WTC11 (cell line): ENCODE measurements at regions of chr17 and their contacts with region 1.

Region 1: DNA sequence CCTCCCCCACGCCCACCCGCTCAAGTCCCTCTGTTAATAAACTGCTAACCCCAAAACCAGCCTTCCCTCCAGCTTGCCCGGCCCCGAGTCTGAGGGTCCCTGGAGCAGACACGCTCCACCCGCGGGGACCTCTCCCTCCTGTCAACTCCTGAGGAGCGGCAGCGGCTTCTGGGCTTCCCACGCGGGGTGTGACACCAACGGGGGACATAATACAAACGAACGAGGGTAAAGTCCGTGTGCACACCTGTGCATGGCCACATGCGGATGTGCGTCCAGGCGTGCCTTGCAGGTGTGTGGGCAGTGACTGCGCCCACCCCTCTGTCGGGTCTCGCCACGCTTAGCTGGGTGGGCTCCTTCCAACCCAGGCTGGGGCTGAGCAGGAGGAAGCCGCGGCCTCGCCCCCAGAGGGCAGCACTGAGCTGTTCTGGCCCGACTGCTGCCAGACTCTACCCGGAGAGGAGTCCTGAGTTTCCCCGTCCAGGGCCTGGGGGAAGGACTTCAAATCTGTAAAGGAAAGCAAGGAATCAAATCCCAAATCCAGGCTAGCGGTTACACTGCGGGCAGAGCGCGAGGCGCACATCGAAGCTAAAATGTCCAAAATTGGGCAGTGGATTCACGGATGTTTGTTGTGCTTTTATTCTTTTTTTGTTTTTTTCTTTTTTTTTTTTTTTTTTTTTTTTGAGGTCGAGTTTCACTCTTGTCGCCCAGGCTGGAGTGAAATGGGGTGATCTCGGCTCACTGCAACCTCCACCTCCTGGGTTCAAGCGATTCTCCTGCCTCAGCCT is 24.2 kb upstream of the KRT17 start:
- DNase-seq: peak; percentile 94
- ATAC-seq: peak; percentile 81
- H3K4me3 Mint-ChIP-seq: peak overlapping the region; percentile 71
- H3K27ac Mint-ChIP-seq: no peak overlapping the region
- H3K4me1 Mint-ChIP-seq: peaks cover 2% of the 10 kb centered on the region
- H3K27me3 Mint-ChIP-seq: no peaks in the 10 kb centered on the region
- CTCF ChIP-seq: peak; percentile 90

Region 2: DNA sequence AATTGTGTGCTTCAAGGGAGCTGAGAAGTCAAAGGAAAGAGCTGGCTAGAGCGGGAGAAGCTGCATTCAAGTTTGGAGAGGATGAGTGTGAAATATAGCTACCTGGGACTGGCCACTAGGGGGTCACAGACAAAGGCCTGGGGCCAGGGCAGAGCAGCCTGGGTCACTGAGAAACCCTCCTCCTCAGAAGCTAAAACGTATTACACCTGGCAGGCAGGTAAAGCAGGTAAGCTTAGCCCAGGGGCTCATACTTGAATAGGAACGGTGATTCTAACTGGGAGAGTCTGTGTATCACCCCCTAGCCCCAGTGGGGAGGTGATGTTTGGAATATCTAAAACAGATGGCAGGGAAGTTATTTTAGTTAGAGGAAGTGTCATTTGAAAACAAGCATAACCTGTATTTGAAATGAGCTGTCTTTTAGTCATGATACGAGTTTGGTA is 231.0 kb before region 1 on chr17:
- CTCF ChIA-PET with region 1: interaction called, 12 read pairs
- POLR2A ChIA-PET with region 1: no interaction called
- DNase-seq: peak; percentile 59
- ATAC-seq: peak; percentile 96
- H3K4me3 Mint-ChIP-seq: no peak overlapping the region
- H3K27ac Mint-ChIP-seq: no peak overlapping the region
- H3K4me1 Mint-ChIP-seq: peaks cover 17% of the 10 kb centered on the region
- H3K27me3 Mint-ChIP-seq: no peaks in the 10 kb centered on the region
- CTCF ChIP-seq: peak; percentile 65

Region 3: DNA sequence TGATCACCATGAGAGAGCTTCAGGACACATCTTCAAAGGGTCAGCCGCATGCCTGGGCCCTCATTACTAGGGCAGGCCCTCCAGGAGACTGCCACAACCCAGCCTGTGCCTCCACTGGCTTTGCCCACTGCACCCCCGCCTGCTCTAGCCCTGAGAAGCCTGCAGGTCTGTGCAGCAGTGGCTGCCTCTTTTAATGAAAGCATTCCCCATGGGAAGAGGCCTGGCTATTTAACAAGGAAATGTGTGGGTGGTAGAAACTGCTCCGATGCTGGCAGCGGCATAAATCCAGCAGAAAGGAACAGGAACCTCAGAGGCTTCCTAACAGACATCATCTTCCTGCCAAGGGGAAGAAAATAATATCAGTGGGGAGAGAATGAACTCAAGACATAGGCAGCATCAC is 181.0 kb before region 1 on chr17:
- CTCF ChIA-PET with region 1: no interaction called
- POLR2A ChIA-PET with region 1: no interaction called
- DNase-seq: no peak
- ATAC-seq: no peak
- H3K4me3 Mint-ChIP-seq: no peak overlapping the region
- H3K27ac Mint-ChIP-seq: no peak overlapping the region
- H3K4me1 Mint-ChIP-seq: no peaks in the 10 kb centered on the region
- H3K27me3 Mint-ChIP-seq: peaks cover 5% of the 10 kb centered on the region
- CTCF ChIP-seq: no peak

Region 4: GRCh38 chr17:41530062-41531051 is 118.2 kb before region 1 on chr17:
- CTCF ChIA-PET with region 1: interaction called, 25 read pairs
- POLR2A ChIA-PET with region 1: interaction called, 4 read pairs
- DNase-seq: no peak
- ATAC-seq: no peak
- H3K4me3 Mint-ChIP-seq: no peak overlapping the region
- H3K27ac Mint-ChIP-seq: no peak overlapping the region
- H3K4me1 Mint-ChIP-seq: peaks cover 41% of the 10 kb centered on the region
- H3K27me3 Mint-ChIP-seq: peaks cover 6% of the 10 kb centered on the region
- CTCF ChIP-seq: no peak

Region 5: DNA sequence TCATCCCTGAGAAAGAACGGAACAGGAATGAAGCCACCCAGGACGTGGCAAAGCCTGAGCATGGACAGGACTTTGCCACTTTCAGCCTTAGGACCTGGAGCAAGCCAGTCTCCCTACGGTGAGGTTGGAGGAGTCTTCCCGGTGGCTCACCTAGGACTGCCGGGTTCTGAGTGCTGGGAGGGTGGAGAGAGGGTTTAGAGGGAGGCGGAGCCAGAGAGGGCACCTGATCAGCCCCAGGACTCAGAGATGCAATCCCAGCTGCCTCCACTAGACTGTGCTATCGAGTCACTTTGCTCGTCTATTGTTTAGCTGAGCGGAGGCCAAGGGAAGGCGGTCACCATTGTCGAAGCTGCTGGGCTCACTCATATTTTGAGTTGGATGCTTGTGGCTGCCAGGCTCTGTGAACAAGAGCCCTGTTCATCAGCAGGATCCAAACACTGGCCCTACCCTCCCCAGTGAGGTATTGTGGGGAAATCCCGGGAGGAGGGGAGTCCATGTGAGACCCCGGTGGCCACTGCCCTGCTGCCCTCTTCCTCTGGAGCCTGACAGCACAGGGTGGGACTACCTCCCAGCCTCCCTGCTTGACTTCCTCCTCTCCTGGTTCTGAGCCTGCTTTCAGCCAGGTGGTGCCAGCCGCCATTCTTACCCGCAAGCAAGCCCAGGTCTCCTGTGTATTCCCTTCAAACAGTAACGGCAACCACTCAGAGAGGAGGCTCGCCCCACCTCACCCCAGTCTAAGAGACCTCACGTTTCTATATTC is 68.9 kb before region 1 on chr17:
- CTCF ChIA-PET with region 1: interaction called, 41 read pairs
- POLR2A ChIA-PET with region 1: no interaction called
- DNase-seq: peak; percentile 97
- ATAC-seq: peak; percentile 99
- H3K4me3 Mint-ChIP-seq: no peak overlapping the region
- H3K27ac Mint-ChIP-seq: no peak overlapping the region
- H3K4me1 Mint-ChIP-seq: peaks cover 11% of the 10 kb centered on the region
- H3K27me3 Mint-ChIP-seq: peaks cover 29% of the 10 kb centered on the region
- CTCF ChIP-seq: peak; percentile 84

Region 6: GRCh38 chr17:41615454-41615853 is 33.1 kb before region 1 on chr17:
- CTCF ChIA-PET with region 1: interaction called, 23 read pairs
- POLR2A ChIA-PET with region 1: no interaction called
- DNase-seq: no peak
- ATAC-seq: peak; percentile 65
- H3K4me3 Mint-ChIP-seq: no peak overlapping the region
- H3K27ac Mint-ChIP-seq: no peak overlapping the region
- H3K4me1 Mint-ChIP-seq: peaks cover 10% of the 10 kb centered on the region; the same call in 1 of the 2 replicates
- H3K27me3 Mint-ChIP-seq: no peaks in the 10 kb centered on the region
- CTCF ChIP-seq: no peak

Region 7: GRCh38 chr17:41688699-41689496 is 40.3 kb after region 1 on chr17 and contains the start of gene EIF1:
- CTCF ChIA-PET with region 1: interaction called, 13 read pairs
- POLR2A ChIA-PET with region 1: interaction called, 5 read pairs
- DNase-seq: peak; percentile 100
- ATAC-seq: peak; percentile 86
- H3K4me3 Mint-ChIP-seq: peak within 1 kb of the TSS; percentile 92
- H3K27ac Mint-ChIP-seq: peak within 1 kb of the TSS; percentile 99
- H3K4me1 Mint-ChIP-seq: peaks cover 15% of the 10 kb centered on the region
- H3K27me3 Mint-ChIP-seq: peaks cover 9% of the 10 kb centered on the region
- CTCF ChIP-seq: no peak
- total RNA-seq, gene EIF1: 466 to 481 TPM (median 475 TPM) in 3 replicates

Region 8: GRCh38 chr17:41738077-41738735 is 89.6 kb after region 1 on chr17:
- CTCF ChIA-PET with region 1: no interaction called
- POLR2A ChIA-PET with region 1: no interaction called
- DNase-seq: peak; percentile 91
- ATAC-seq: peak; percentile 71
- H3K4me3 Mint-ChIP-seq: no peak overlapping the region
- H3K27ac Mint-ChIP-seq: peak overlapping the region; percentile 82
- H3K4me1 Mint-ChIP-seq: peaks cover 22% of the 10 kb centered on the region
- H3K27me3 Mint-ChIP-seq: peaks cover 47% of the 10 kb centered on the region
- CTCF ChIP-seq: peak; percentile 98

Region 9: DNA sequence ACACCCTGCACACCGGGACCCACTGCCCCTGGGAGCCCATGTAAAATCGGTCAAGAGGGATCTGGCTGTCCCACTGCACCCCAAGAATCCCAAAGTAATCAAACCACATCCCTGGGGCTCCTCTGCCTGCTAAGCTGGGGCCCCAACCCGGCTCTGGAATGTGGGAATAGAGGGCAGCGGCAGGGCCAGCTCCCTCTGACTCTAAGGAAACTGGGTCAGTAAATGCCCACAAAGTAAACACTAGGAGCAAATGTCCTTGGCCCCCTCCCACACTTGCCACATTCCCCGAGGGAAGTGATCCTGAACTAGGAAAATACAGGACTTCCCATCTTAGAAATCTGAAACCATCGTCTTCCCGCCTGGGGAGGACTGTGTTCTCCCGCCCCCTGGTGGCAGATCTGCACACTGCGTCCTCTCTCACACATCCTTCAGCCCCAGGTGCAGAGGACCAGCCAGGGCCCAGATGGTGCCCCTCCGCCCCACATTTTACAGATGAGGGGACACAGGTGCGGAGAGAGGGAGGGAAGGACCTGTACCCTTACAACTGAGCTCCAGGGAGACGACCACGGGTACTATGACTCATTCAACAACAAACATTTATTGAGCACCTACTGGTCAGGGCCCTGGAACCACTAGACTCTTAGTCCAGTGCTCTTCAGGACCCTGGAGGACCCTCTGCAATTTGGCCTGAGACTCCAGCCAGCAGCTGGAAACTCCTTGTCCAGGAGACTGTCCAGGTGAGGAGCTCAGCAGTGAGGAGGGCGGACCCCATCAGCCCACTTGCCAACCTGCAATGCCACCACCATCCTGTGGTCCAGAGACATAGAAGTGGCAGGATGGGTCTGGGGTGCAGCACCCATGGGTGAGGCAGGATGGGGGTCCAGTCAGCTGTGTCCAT is 153.0 kb after region 1 on chr17:
- CTCF ChIA-PET with region 1: no interaction called
- POLR2A ChIA-PET with region 1: no interaction called
- DNase-seq: peak; percentile 94
- ATAC-seq: peak; percentile 54
- H3K4me3 Mint-ChIP-seq: peak overlapping the region; percentile 66
- H3K27ac Mint-ChIP-seq: peak overlapping the region; percentile 97
- H3K4me1 Mint-ChIP-seq: peaks cover 26% of the 10 kb centered on the region
- H3K27me3 Mint-ChIP-seq: no peaks in the 10 kb centered on the region
- CTCF ChIP-seq: peak; percentile 97